Sigmoid colon (tissue), 7 donors: ENCODE measurements at regions of chr17 and their contacts with region 1.

Region 1: DNA sequence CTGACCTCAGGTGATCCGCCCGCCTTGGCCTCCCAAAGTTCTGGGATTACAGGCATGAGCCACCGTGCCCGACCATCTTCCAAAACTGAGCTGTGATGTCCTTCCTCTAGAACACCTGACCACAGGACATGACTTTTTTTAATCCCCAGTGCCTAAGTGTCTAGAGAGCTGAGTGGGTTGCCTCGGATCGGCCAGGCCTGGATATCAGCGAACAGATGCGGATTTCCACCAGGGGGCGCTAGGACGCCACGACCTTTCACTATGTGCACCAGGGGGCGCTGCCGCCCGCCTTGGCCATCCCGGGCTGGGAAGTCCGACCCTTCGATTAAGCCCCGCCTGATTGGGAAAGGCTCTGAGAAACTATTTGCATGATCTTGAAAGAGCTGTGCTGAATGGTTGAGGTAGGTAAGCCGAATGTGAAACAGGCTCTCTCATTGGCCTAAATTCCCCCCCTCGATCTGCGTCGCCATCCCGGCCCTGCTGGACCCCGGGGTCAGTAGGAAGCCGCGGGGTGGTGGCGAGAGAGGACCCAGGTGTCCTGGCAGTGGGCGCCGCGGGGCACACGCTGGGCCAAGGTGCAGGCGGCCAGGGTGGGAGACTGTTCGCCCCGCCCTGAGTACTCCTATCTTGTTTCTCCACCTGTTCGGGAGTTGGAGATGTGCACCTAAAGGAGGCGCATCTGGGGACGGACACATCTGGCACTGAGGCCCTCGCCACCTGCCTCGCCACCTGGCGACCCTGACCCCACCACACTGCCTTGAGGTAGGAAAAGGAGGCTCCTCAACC is at the start of gene ACBD4:
- DNase-seq: peak; percentile 98
- H3K4me3 ChIP-seq: peak within 1 kb of the TSS; percentile 58 to 72 (median 61)
- H3K27ac ChIP-seq: peak within 1 kb of the TSS; percentile 84 to 89 (median 88)
- H3K4me1 ChIP-seq: peaks cover 0 to 39% (median 29%) of the 10 kb centered on the region in 4 donors
- H3K27me3 ChIP-seq: no peaks in the 10 kb centered on the region
- CTCF ChIP-seq: peak; percentile 99 to 100 (median 100)
- EP300 ChIP-seq: no peak
- POLR2A ChIP-seq: peak; percentile 63 to 85
- total RNA-seq, gene ACBD4: 20.0 to 24.9 (median 21.9) TPM

Region 2: DNA sequence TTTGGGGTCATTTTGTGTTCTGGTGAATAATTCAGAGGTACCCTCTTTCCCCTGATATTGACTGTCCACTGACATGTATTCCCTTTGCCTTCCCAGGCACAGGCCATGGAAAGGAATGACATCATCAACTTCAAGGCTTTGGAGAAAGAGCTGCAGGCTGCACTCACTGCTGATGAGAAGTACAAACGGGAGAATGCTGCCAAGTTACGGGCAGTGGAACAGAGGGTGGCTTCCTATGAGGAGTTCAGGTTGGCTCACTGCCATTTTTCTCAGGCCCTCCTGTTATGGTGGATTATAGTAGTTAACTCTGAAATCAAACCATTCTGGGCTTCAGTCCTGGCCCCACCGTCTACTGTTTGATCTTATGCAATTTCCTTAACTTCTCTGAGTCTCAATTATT is 234.5 kb before region 1 on chr17:
- intact Hi-C with region 1: loop called (anchors 2 kb)
- DNase-seq: peak; percentile 83
- H3K4me3 ChIP-seq: no peak overlapping the region
- H3K27ac ChIP-seq: peak overlapping the region; percentile 9 to 94 (median 92)
- H3K4me1 ChIP-seq: peaks cover 0 to 38% (median 29%) of the 10 kb centered on the region in 4 donors
- H3K27me3 ChIP-seq: no peaks in the 10 kb centered on the region
- CTCF ChIP-seq: no peak
- EP300 ChIP-seq: no peak
- POLR2A ChIP-seq: no peak

Region 3: GRCh38 chr17:44919885-44920564 is 215.4 kb before region 1 on chr17:
- intact Hi-C with region 1: loop called (anchors 5 kb)
- DNase-seq: peak; percentile 94
- H3K4me3 ChIP-seq: no peak overlapping the region
- H3K27ac ChIP-seq: no peak overlapping the region
- H3K4me1 ChIP-seq: peaks cover 0 to 23% (median 20%) of the 10 kb centered on the region in 4 donors
- H3K27me3 ChIP-seq: no peaks in the 10 kb centered on the region
- CTCF ChIP-seq: peak; percentile 79 to 91 (median 89)
- EP300 ChIP-seq: no peak
- POLR2A ChIP-seq: no peak

Region 4: DNA sequence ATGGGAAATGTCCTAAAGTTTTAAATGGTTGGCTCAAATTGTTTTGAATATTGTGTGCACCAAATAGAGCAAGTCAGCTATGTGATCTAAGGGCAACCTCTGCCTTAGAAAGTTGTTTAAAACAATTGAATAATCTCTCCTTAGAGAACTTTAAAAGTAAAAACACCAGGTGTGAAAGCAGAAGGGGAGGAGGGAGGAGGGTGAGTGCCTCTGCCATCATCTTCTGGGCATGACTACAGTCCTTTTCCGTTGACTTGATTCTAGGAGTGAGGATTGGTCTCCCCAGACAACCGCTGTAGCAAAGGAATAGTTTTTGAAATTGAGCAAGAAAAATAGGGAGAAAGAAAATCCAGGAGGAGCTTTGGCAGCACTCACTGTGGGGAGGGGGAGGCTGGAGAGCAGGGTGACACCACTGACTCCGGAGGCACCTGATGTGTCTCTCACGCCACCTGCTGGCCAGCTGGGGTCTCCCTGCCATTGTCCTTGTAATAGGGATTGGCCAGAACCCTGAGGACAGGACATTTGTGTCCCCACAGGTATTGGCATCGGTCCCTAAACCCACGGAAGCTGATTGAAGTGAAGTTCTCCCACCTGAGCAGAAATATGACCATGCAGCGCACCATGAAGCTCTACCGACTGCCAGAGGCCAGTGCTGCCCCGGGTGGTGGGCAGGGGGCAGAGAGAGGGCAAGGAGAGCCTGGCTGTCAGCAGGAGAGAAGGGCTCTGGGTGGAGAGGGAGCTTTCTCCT is 36.3 kb before region 1 on chr17:
- intact Hi-C with region 1: loop called (anchors 2 kb)
- DNase-seq: peak; percentile 97
- H3K4me3 ChIP-seq: no peak overlapping the region
- H3K27ac ChIP-seq: peak overlapping the region; percentile 30 to 79 (median 50)
- H3K4me1 ChIP-seq: peaks cover 0 to 25% (median 21%) of the 10 kb centered on the region in 4 donors
- H3K27me3 ChIP-seq: no peaks in the 10 kb centered on the region
- CTCF ChIP-seq: peak; percentile 77 to 92 (median 86)
- EP300 ChIP-seq: no peak
- POLR2A ChIP-seq: no peak

Region 5: DNA sequence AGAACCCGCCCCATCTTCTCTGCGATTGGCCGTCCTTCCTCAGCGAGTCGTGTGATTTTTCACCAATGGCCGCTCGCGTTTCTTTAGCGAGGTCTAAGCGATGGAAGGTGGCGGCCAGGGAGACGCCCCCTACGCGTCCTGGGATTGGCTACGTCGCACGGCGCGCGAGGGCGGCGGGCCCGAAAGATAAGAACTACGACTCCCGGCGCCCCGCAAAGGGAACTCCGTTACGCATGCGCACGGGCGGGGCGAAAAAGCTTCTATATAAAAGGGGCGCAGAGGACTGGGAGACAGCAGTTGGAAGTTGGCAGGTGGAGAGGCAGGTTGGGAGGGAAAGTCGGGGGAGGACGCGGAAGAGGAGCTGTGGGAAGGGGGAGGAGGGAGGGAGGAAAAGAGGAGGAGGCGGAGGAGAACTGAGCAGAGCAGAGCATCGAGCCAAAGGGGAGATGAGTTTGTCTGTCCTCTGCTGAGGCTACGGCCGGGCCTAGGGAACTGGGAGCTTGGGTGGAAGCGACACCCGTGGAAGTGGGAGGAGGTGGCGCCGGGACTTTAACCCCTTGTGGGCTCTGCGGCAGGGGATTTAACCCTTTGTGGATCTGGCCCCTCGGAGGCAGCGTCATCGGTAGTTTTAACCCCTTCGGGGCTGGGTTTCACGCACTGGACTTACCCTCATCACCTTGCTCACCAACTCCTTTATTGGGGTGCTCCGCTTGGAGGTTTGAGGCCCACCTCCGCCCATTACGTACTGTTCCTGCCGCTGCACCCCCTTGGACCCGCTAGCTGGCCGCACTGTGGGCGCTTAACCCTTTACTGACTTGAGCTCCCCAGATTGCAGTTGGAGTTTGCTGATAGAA is 13.0 kb after region 1 on chr17 and contains the start of gene HEXIM1:
- intact Hi-C with region 1: loop called (anchors 2 kb)
- DNase-seq: peak; percentile 100
- H3K4me3 ChIP-seq: peak within 1 kb of the TSS; percentile 81 to 92 (median 89)
- H3K27ac ChIP-seq: peak within 1 kb of the TSS; percentile 97 to 99 (median 98)
- H3K4me1 ChIP-seq: peaks cover 6 to 59% (median 50%) of the 10 kb centered on the region in 4 donors
- H3K27me3 ChIP-seq: no peaks in the 10 kb centered on the region
- CTCF ChIP-seq: no peak
- EP300 ChIP-seq: peak in 1 of 4 donors; percentile 68
- POLR2A ChIP-seq: peak; percentile 100
- total RNA-seq, gene HEXIM1: 41.0 to 60.9 (median 49.4) TPM

Region 6: GRCh38 chr17:45197555-45198334 is 62.4 kb after region 1 on chr17:
- intact Hi-C with region 1: loop called (anchors 1 kb)
- DNase-seq: peak; percentile 95
- H3K4me3 ChIP-seq: no peak overlapping the region
- H3K27ac ChIP-seq: peak overlapping the region; percentile 58 to 77 (median 70)
- H3K4me1 ChIP-seq: peaks cover 0 to 15% (median 11%) of the 10 kb centered on the region in 4 donors
- H3K27me3 ChIP-seq: no peaks in the 10 kb centered on the region
- CTCF ChIP-seq: peak; percentile 99
- EP300 ChIP-seq: no peak
- POLR2A ChIP-seq: no peak